Colonic mucosa (tissue), 4 donors: ENCODE measurements at regions of chr5 and their contacts with region 1.

Region 1: GRCh38 chr5:1004461-1005248 is 3.9 kb upstream of the NKD2 start:
- DNase-seq: peak; percentile 70
- H3K4me3 ChIP-seq: peak overlapping the region; percentile 45
- H3K27ac ChIP-seq: no peak overlapping the region
- H3K4me1 ChIP-seq: peaks cover 8% of the 10 kb centered on the region
- H3K27me3 ChIP-seq: peaks cover 47% of the 10 kb centered on the region
- CTCF ChIP-seq: no peak

Region 2: DNA sequence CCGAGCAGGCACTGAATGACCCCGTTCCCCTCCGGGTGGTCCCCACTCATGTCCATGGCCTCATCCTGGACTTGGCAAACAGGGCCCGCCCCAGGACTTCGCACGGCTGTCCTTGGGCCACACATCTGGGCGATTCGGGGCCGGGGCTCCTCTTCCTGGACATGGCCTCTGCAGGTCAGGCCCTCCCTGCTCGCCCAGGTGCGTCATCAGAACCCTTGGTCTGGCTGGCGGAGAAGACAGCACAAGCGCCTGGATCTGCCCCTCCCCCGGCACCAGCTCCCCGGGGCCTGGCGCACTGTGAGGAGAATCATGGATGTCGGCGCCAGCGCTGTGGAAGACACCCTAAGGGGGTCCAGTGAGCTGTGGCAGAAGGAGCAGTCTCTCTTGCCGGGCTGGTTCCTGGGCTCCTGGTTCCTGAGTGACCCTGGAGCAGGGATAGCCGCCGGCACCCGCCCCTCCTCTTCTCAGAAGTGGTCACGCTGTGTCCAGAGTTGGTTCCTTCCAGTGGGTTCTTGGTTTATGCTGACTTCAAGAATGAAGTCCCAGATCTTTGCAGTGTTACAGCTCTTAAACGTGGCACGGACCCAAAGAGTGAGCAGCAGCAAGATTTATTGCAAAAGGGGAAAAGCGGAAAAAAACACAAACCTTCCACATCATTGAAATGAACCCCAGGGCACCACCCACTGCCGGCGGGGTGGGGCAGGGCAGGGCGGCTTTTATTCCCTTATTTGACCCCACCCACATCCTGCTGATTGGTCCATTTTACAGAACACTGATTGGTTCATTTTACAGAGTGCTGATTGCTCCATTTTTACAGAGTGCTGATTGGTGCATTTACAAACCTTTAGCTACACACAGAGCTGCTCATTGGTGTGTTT is 133.2 kb after region 1 on chr5:
- intact Hi-C with region 1: loop called (anchors 5 kb)
- DNase-seq: peak; percentile 75
- H3K4me3 ChIP-seq: no peak overlapping the region
- H3K27ac ChIP-seq: no peak overlapping the region
- H3K4me1 ChIP-seq: peaks cover 11% of the 10 kb centered on the region
- H3K27me3 ChIP-seq: no peaks in the 10 kb centered on the region
- CTCF ChIP-seq: no peak